ENCODE measurements at regions of chrX and their contacts with region 1.

Region 1: GRCh38 chrX:150486011-150486410 is 82.4 kb upstream of the MTM1 start:
- DNase-seq: peak; percentile 86
- H3K4me3 Mint-ChIP-seq: no peak overlapping the region
- H3K27ac Mint-ChIP-seq: no peak overlapping the region
- H3K4me1 Mint-ChIP-seq: peaks cover 38% of the 10 kb centered on the region
- H3K27me3 Mint-ChIP-seq: no peaks in the 10 kb centered on the region

Region 2: DNA sequence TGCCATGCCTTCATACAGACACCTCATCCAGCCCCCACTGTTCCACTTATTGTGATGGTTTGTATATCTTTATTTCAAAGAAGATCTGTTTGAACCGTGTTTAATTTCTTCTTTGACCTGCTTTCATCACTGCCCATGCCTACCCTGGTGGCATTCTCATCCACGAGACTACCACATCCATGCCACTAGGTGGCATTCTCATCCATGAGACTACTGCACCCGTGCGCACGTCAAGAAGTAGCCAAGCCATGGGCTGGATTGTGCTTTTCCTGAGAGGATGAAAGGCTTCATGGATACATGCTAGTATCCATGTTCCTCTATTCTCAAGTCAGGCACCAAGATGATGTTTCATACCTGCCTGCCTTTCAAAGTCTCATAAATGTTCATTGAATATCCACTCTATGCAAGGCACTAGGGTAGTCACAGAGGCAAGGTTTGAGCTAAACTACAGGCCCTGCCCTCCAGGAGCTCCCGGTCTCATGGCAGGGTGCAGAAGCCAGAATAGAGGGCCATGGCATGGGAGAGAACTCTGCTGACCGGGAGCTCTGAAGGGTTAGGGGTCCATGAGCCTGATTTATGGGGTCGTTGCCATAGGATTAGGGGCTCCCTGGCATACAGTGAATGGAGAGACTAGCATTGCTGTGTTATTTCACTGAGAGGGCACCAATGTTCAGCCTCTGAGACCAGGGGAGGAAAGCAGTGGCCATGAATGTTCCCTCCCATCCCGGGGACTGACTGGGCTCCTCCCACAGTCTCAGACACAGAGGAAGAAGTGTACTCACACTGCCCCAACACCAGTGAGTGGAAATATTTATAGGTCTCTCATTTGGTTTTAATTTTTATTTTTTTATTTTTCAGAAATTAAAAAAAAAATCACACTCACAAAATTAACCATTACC is 522.9 kb before region 1 on chrX:
- intact Hi-C with region 1: loop called (anchors 5 kb)
- DNase-seq: peak; percentile 74
- H3K4me3 Mint-ChIP-seq: no peak overlapping the region
- H3K27ac Mint-ChIP-seq: no peak overlapping the region
- H3K4me1 Mint-ChIP-seq: no peaks in the 10 kb centered on the region
- H3K27me3 Mint-ChIP-seq: no peaks in the 10 kb centered on the region

Region 3: GRCh38 chrX:150449313-150449712 is 36.7 kb before region 1 on chrX:
- intact Hi-C with region 1: loop called (anchors 5 kb)
- DNase-seq: peak; percentile 53
- H3K4me3 Mint-ChIP-seq: no peak overlapping the region
- H3K27ac Mint-ChIP-seq: no peak overlapping the region
- H3K4me1 Mint-ChIP-seq: peaks cover 25% of the 10 kb centered on the region
- H3K27me3 Mint-ChIP-seq: no peaks in the 10 kb centered on the region

Region 4: DNA sequence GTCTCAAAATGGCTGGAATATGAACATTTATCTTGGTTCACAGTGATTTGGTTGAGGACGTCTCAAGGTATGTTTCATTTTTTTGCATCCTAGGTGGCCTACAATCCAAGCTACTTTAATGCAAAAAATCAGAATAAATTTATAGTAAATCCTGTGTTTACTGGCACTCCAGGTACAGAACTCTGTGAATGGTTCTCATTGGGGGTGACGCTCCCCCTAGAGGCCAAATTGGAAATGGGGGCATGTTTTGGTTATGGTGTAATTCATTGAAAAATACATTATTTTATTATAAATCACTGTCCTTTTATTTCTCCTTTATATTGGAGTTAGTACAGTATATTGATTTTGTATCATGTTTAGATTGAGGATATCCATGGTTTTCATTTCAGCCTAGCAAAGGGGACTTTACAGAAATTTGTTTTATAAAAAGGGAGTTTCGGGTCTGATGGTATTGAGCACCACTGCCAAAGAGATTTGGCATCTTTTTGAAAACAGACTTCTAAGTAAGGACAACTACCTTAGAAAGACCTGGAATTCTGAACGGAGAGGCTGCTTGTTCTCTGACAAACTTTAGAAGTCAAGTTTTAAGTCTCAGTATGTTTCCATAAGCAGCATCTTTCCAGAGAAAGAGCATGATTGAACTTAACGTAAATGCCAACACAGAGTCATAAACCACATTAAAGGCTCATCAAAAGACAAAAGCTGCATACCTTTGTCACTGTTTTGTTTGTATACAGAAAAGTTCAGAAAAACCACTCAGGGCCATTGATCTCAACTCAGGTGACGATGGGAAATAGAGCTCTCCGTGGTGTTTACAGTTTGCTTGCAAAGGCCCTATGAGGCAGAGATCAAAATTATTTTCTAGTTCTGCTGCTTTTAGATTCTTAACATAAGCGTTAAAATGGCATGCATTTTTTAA is 101.8 kb after region 1 on chrX:
- intact Hi-C with region 1: loop called (anchors 2 kb)
- DNase-seq: peak; percentile 75
- H3K4me3 Mint-ChIP-seq: no peak overlapping the region
- H3K27ac Mint-ChIP-seq: no peak overlapping the region
- H3K4me1 Mint-ChIP-seq: peaks cover 20% of the 10 kb centered on the region
- H3K27me3 Mint-ChIP-seq: no peaks in the 10 kb centered on the region

Region 5: DNA sequence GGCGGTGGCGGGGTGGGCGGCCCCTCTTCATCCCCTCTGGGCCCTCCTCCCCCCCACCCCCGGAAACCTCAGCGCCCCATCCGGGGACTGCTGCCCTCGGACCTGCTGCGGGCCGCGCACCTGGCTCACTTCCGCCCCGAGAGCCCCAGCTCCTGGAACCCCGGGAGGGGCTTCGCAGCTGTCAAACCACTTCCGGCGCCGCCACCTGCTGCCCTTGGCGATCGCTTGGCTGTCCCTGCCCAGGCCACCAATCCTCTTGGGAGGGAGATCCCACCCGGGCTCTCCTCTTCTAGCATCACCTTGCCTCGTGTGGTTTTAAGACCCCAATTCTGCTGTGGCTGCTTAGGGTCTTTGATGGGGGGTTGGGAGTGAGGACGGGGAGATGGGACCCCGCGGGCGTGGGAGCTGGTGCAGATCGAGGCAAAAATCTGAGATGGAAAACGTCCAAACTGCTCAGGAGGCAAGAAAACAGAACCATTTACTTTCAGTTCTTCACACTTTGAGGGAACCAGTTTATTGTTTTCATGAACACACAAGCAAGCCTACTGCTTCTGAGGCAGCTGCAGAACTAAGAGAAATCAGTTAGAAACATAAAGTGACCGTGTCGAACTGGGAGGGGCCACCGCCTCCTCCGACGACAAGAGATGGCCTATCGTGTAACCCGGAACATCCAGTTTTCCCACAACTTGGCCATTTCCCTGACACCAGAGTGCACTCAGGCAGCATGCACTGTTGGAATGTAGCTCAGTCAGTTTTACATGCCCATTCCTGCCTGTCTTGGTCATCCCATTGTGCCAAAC is 208.0 kb after region 1 on chrX:
- intact Hi-C with region 1: loop called (anchors 2 kb)
- DNase-seq: peak; percentile 91
- H3K4me3 Mint-ChIP-seq: peak overlapping the region; percentile 89
- H3K27ac Mint-ChIP-seq: peak overlapping the region; percentile 97
- H3K4me1 Mint-ChIP-seq: peaks cover 58% of the 10 kb centered on the region
- H3K27me3 Mint-ChIP-seq: no peaks in the 10 kb centered on the region

Measured in activated CD4-positive, alpha-beta T cell treated with anti-CD3 and anti-CD28 coated beads, Interleukin-2, amount 10 ng/mL, durations not matched to agents 24 days and 14 days (primary cell).